Right ventricle myocardium inferior (tissue), 1 donor: ENCODE measurements at regions of chr17 and their contacts with region 1.

Region 1: GRCh38 chr17:45148183-45149036 is at the start of gene HEXIM1:
- DNase-seq: peak; percentile 100
- ATAC-seq: peak; percentile 80
- total RNA-seq, gene HEXIM1: 33.1 TPM

Region 2: GRCh38 chr17:44417553-44417952 is 730.9 kb before region 1 on chr17:
- intact Hi-C with region 1: no loop called
- DNase-seq: no peak
- ATAC-seq: no peak

Region 3: GRCh38 chr17:44745301-44745700 is 403.1 kb before region 1 on chr17:
- intact Hi-C with region 1: no loop called
- DNase-seq: no peak
- ATAC-seq: no peak

Region 4: DNA sequence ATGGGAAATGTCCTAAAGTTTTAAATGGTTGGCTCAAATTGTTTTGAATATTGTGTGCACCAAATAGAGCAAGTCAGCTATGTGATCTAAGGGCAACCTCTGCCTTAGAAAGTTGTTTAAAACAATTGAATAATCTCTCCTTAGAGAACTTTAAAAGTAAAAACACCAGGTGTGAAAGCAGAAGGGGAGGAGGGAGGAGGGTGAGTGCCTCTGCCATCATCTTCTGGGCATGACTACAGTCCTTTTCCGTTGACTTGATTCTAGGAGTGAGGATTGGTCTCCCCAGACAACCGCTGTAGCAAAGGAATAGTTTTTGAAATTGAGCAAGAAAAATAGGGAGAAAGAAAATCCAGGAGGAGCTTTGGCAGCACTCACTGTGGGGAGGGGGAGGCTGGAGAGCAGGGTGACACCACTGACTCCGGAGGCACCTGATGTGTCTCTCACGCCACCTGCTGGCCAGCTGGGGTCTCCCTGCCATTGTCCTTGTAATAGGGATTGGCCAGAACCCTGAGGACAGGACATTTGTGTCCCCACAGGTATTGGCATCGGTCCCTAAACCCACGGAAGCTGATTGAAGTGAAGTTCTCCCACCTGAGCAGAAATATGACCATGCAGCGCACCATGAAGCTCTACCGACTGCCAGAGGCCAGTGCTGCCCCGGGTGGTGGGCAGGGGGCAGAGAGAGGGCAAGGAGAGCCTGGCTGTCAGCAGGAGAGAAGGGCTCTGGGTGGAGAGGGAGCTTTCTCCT is 49.4 kb before region 1 on chr17:
- intact Hi-C with region 1: no loop called
- DNase-seq: peak; percentile 93
- ATAC-seq: peak; percentile 80

Region 5: GRCh38 chr17:45161019-45161825 is 12.8 kb after region 1 on chr17:
- intact Hi-C with region 1: loop called (anchors 1 kb)
- DNase-seq: peak; percentile 99
- ATAC-seq: peak; percentile 97

Region 6: GRCh38 chr17:45184144-45184543 is 35.7 kb after region 1 on chr17:
- intact Hi-C with region 1: no loop called
- DNase-seq: no peak
- ATAC-seq: no peak